ENCODE measurements at regions of chr6 and their contacts with region 1.

Region 1: GRCh38 chr6:137823826-137824555 is 43.1 kb upstream of the TNFAIP3 start:
- DNase-seq: peak; percentile 95
- H3K4me3 ChIP-seq: no peak overlapping the region
- H3K27ac ChIP-seq: peak overlapping the region; percentile 87
- H3K4me1 ChIP-seq: peaks cover 34% of the 10 kb centered on the region
- H3K27me3 ChIP-seq: no peaks in the 10 kb centered on the region
- CTCF ChIP-seq: no peak

Region 2: GRCh38 chr6:137728385-137729349 is 95.3 kb before region 1 on chr6:
- CTCF ChIA-PET with region 1: no interaction called
- dilution Hi-C with region 1: loop called (anchors 5 kb)
- in situ Hi-C with region 1: no loop called
- intact Hi-C with region 1: no loop called
- DNase-seq: peak; percentile 99
- H3K4me3 ChIP-seq: no peak overlapping the region
- H3K27ac ChIP-seq: peak overlapping the region; percentile 91
- H3K4me1 ChIP-seq: peaks cover 51% of the 10 kb centered on the region
- H3K27me3 ChIP-seq: no peaks in the 10 kb centered on the region
- CTCF ChIP-seq: no peak

Region 3: DNA sequence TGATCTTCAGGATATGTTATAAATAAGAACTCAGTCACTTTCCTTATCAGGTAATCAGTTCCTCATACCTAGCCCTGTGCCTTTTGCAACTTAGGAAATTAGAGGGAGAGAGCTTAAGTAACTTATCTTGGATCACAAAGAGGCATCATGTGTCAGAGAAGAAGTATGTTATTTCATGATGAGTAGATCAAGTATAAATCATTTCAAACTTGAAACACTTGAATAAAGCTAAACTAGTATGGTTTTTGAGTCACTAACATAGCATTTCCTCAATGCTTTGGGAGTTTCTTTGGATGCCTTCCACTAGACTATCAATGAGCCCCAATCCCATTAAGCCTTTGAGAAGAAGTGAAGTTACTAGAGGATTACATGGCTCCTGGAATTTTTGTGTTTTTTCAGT is 59.5 kb before region 1 on chr6:
- CTCF ChIA-PET with region 1: no interaction called
- dilution Hi-C with region 1: no loop called
- in situ Hi-C with region 1: no loop called
- intact Hi-C with region 1: no loop called
- DNase-seq: peak; percentile 92
- H3K4me3 ChIP-seq: no peak overlapping the region
- H3K27ac ChIP-seq: peak overlapping the region; percentile 83
- H3K4me1 ChIP-seq: peaks cover 41% of the 10 kb centered on the region
- H3K27me3 ChIP-seq: no peaks in the 10 kb centered on the region
- CTCF ChIP-seq: no peak

Region 4: DNA sequence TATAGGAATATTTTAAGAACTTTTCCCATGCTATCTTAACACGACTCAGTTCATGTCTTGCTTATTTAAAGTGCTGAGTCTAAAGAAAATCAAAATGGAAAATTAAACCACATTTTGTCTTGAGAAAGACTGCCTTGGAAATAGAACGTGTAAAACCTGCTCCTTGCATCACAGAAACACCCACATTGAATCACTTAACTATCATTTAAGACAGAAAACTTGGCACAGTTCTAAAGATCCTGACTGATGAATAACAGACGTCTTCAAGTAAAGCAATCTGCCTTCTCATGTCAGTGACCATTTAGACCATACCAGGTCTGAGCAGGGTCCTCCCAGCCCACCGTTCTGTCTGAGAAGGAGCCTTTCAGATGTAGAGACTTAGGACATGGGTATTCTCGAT is 275.8 kb after region 1 on chr6:
- CTCF ChIA-PET with region 1: no interaction called
- dilution Hi-C with region 1: loop called (anchors 5 kb)
- in situ Hi-C with region 1: no loop called
- intact Hi-C with region 1: no loop called
- DNase-seq: peak; percentile 85
- H3K4me3 ChIP-seq: peak overlapping the region in 2 of 3 experiments; percentile 15
- H3K27ac ChIP-seq: peak overlapping the region; percentile 75
- H3K4me1 ChIP-seq: peaks cover 37% of the 10 kb centered on the region
- H3K27me3 ChIP-seq: no peaks in the 10 kb centered on the region
- CTCF ChIP-seq: no peak